CD14-positive monocyte (primary cell): ENCODE measurements at regions of chrX and their contacts with region 1.

Region 1: GRCh38 chrX:74291964-74292807 is 11.8 kb upstream of the ZCCHC13 start:
- DNase-seq: peak; percentile 72 to 84 (median 81)
- H3K4me3 ChIP-seq: peak overlapping the region; percentile 64 to 80 (median 76)
- H3K4me3 Mint-ChIP-seq: peak overlapping the region; percentile 94 to 98
- H3K27ac ChIP-seq: peak overlapping the region; percentile 84 to 92
- H3K27ac Mint-ChIP-seq: peak overlapping the region; percentile 94 to 99 (median 96)
- H3K4me1 ChIP-seq: peaks cover 0 to 7% of the 10 kb centered on the region in 2 donors
- H3K4me1 Mint-ChIP-seq: peaks cover 22% of the 10 kb centered on the region
- H3K27me3 ChIP-seq: no peaks in the 10 kb centered on the region
- H3K27me3 Mint-ChIP-seq: peaks cover 0 to 6% (median 0%) of the 10 kb centered on the region in 3 donors
- CTCF ChIP-seq: no peak

Region 2: DNA sequence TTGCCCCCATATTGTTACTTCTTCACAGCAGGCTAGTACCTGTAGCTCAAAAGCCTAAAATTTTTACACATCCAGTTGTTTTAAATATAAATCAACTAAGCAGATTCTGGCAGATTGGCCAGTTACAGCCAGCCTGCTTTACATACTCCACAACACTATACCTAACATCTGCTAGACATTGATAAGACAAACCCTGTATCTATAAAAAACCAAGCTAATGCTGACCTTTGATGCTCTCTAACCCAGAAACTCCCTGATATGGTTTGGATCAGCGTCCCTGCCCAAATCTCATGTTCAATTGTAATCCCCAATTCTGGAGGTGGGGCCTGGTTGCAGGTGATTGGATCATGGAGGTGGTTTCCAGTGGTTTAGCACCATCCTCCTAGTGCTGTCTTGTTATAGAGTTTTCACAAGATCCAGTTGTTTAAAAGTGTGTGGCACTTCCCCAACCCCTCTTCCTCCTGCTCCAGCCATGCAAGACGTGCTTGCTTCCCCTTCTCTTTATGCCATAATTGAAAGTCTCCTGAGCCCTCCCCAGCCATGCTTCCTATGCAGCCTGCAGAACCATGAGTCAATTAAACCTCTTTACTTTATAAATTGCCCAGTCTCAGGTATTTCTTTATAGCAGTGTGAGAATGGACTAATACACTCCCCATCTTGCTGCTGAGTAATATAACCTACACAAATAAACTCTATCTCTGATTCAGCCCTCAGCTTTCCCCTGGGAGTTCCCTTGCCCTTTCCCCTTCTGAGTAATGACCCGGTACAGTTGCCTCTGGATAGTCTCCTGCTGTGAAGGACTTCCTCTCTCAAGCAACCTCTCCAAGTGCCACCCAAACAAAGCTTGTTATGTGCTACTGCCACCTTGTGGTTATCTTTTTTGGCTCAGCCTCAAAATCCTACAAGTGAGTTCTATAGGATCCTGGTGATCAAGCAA is 51.4 kb after region 1 on chrX:
- intact Hi-C with region 1: loop called in 1 of 2 experiments (anchors 10 kb)
- DNase-seq: peak; percentile 65 to 91 (median 78)
- H3K4me3 ChIP-seq: no peak overlapping the region
- H3K4me3 Mint-ChIP-seq: peak overlapping the region; percentile 16 to 65
- H3K27ac ChIP-seq: peak overlapping the region; percentile 36 to 52
- H3K27ac Mint-ChIP-seq: peak overlapping the region; percentile 65 to 87 (median 85)
- H3K4me1 ChIP-seq: peaks cover 22 to 25% of the 10 kb centered on the region in 2 donors
- H3K4me1 Mint-ChIP-seq: peaks cover 22% of the 10 kb centered on the region
- H3K27me3 ChIP-seq: no peaks in the 10 kb centered on the region
- H3K27me3 Mint-ChIP-seq: peaks cover 0 to 7% (median 0%) of the 10 kb centered on the region in 3 donors
- CTCF ChIP-seq: peak; percentile 61

Region 3: GRCh38 chrX:74363914-74364313 is 71.7 kb after region 1 on chrX:
- intact Hi-C with region 1: no loop called
- DNase-seq: no peak
- H3K4me3 ChIP-seq: no peak overlapping the region
- H3K4me3 Mint-ChIP-seq: no peak overlapping the region
- H3K27ac ChIP-seq: no peak overlapping the region
- H3K27ac Mint-ChIP-seq: no peak overlapping the region
- H3K4me1 ChIP-seq: no peaks in the 10 kb centered on the region
- H3K4me1 Mint-ChIP-seq: no peaks in the 10 kb centered on the region
- H3K27me3 ChIP-seq: no peaks in the 10 kb centered on the region
- H3K27me3 Mint-ChIP-seq: peaks cover 0 to under 1% (median 0%) of the 10 kb centered on the region in 3 donors
- CTCF ChIP-seq: no peak